Naive thymus-derived CD4-positive, alpha-beta T cell (primary cell): ENCODE measurements at regions of chr2 and their contacts with region 1.

Region 1: GRCh38 chr2:3518496-3519254 is 656 bp downstream of the ADI1 start:
- DNase-seq: peak; percentile 96 to 99 (median 98)
- ATAC-seq: peak; percentile 83
- H3K4me3 ChIP-seq: peak overlapping the region; percentile 89
- H3K4me3 Mint-ChIP-seq: peak overlapping the region; percentile 83 to 96 (median 92)
- H3K27ac ChIP-seq: peak overlapping the region; percentile 96
- H3K27ac Mint-ChIP-seq: peak overlapping the region; percentile 84 to 96 (median 93)
- H3K4me1 ChIP-seq: peaks cover 18% of the 10 kb centered on the region in 2 donors
- H3K4me1 Mint-ChIP-seq: peaks cover 27 to 59% (median 47%) of the 10 kb centered on the region in 7 donors
- H3K27me3 ChIP-seq: no peaks in the 10 kb centered on the region
- H3K27me3 Mint-ChIP-seq: peaks cover 0 to 2% (median 0%) of the 10 kb centered on the region in 5 donors

Region 2: GRCh38 chr2:3223080-3223923 is 295.4 kb before region 1 on chr2:
- CTCF ChIA-PET with region 1: no interaction called
- POLR2A ChIA-PET with region 1: no interaction called
- intact Hi-C with region 1: loop called in 1 of 2 experiments (anchors 2 kb)
- DNase-seq: peak in 7 of 9 donors; percentile 4 to 87 (median 23)
- ATAC-seq: peak; percentile 83
- H3K4me3 ChIP-seq: no peak overlapping the region
- H3K4me3 Mint-ChIP-seq: peak overlapping the region in 8 of 10 donors; percentile 30 to 66 (median 58)
- H3K27ac ChIP-seq: peak overlapping the region; percentile 65
- H3K27ac Mint-ChIP-seq: peak overlapping the region; percentile 81 to 96 (median 93)
- H3K4me1 ChIP-seq: peaks cover 17 to 22% of the 10 kb centered on the region in 2 donors
- H3K4me1 Mint-ChIP-seq: peaks cover 16 to 37% (median 32%) of the 10 kb centered on the region in 7 donors
- H3K27me3 ChIP-seq: no peaks in the 10 kb centered on the region
- H3K27me3 Mint-ChIP-seq: no peaks in the 10 kb centered on the region

Region 3: GRCh38 chr2:3461801-3462492 is 56.7 kb before region 1 on chr2:
- CTCF ChIA-PET with region 1: no interaction called
- POLR2A ChIA-PET with region 1: no interaction called
- intact Hi-C with region 1: loop called in 1 of 2 experiments (anchors 2 kb)
- DNase-seq: peak in 6 of 9 donors; percentile 27 to 64 (median 52)
- ATAC-seq: peak; percentile 80
- H3K4me3 ChIP-seq: no peak overlapping the region
- H3K4me3 Mint-ChIP-seq: peak overlapping the region in 7 of 10 donors; percentile 39 to 75 (median 51)
- H3K27ac ChIP-seq: peak overlapping the region; percentile 49
- H3K27ac Mint-ChIP-seq: peak overlapping the region in 8 of 9 donors; percentile 38 to 89 (median 77)
- H3K4me1 ChIP-seq: peaks cover 0 to 5% of the 10 kb centered on the region in 2 donors
- H3K4me1 Mint-ChIP-seq: peaks cover 4 to 25% (median 14%) of the 10 kb centered on the region in 7 donors
- H3K27me3 ChIP-seq: no peaks in the 10 kb centered on the region
- H3K27me3 Mint-ChIP-seq: no peaks in the 10 kb centered on the region

Region 4: GRCh38 chr2:3558205-3559014 is 39.7 kb after region 1 on chr2 and contains the start of gene RNASEH1:
- CTCF ChIA-PET with region 1: interaction called, 3 read pairs
- POLR2A ChIA-PET with region 1: interaction called, 39 read pairs
- intact Hi-C with region 1: loop called (anchors 1 kb)
- DNase-seq: peak; percentile 94 to 100 (median 97)
- ATAC-seq: peak; percentile 98
- H3K4me3 ChIP-seq: peak within 1 kb of the TSS; percentile 72
- H3K4me3 Mint-ChIP-seq: peak within 1 kb of the TSS; percentile 86 to 93 (median 92)
- H3K27ac ChIP-seq: peak within 1 kb of the TSS; percentile 98
- H3K27ac Mint-ChIP-seq: peak within 1 kb of the TSS; percentile 90 to 98 (median 96)
- H3K4me1 ChIP-seq: peaks cover 11 to 17% of the 10 kb centered on the region in 2 donors
- H3K4me1 Mint-ChIP-seq: peaks cover 7 to 48% (median 37%) of the 10 kb centered on the region in 7 donors
- H3K27me3 ChIP-seq: no peaks in the 10 kb centered on the region
- H3K27me3 Mint-ChIP-seq: no peaks in the 10 kb centered on the region
- total RNA-seq, gene RNASEH1: 17.6 to 31.2 (median 23.4) TPM

Region 5: GRCh38 chr2:3604991-3605961 is 86.6 kb after region 1 on chr2:
- CTCF ChIA-PET with region 1: no interaction called
- POLR2A ChIA-PET with region 1: no interaction called
- intact Hi-C with region 1: loop called in 1 of 2 experiments (anchors 1 kb)
- DNase-seq: peak in 7 of 9 donors; percentile 11 to 65 (median 48)
- ATAC-seq: no peak
- H3K4me3 ChIP-seq: no peak overlapping the region
- H3K4me3 Mint-ChIP-seq: peak overlapping the region in 7 of 10 donors; percentile 18 to 84 (median 75)
- H3K27ac ChIP-seq: no peak overlapping the region
- H3K27ac Mint-ChIP-seq: peak overlapping the region in 6 of 9 donors; percentile 8 to 94 (median 88)
- H3K4me1 ChIP-seq: peaks cover 0 to 6% of the 10 kb centered on the region in 2 donors
- H3K4me1 Mint-ChIP-seq: peaks cover 2 to 35% (median 5%) of the 10 kb centered on the region in 7 donors
- H3K27me3 ChIP-seq: no peaks in the 10 kb centered on the region
- H3K27me3 Mint-ChIP-seq: no peaks in the 10 kb centered on the region